Panc1 (cell line): ENCODE measurements at regions of chr1 and their contacts with region 1.

Region 1: GRCh38 chr1:226051356-226051755 is 11.2 kb upstream of the H3-3A start:
- DNase-seq: no peak
- ATAC-seq: no peak
- H3K4me3 ChIP-seq: no peak overlapping the region
- H3K27ac ChIP-seq: no peak overlapping the region
- H3K4me1 ChIP-seq: 0 out of 2 replicates have a peak, but pooled peaks cover 2% of the 10 kb centered on the region
- H3K27me3 ChIP-seq: no peaks in the 10 kb centered on the region
- CTCF ChIP-seq: no peak

Region 2: GRCh38 chr1:226107471-226108460 is 56.4 kb after region 1 on chr1:
- CTCF ChIA-PET with region 1: no interaction called
- POLR2A ChIA-PET with region 1: interaction called, 11 read pairs
- in situ Hi-C with region 1: no loop called
- intact Hi-C with region 1: no loop called
- DNase-seq: no peak
- ATAC-seq: no peak
- H3K4me3 ChIP-seq: no peak overlapping the region
- H3K27ac ChIP-seq: no peak overlapping the region
- H3K4me1 ChIP-seq: peaks cover 13% of the 10 kb centered on the region
- H3K27me3 ChIP-seq: no peaks in the 10 kb centered on the region
- CTCF ChIP-seq: no peak

Region 3: GRCh38 chr1:227318003-227318852 is 1266.9 kb after region 1 on chr1 and contains the start of gene CDC42BPA:
- CTCF ChIA-PET with region 1: no interaction called
- POLR2A ChIA-PET with region 1: interaction called, 11 read pairs
- in situ Hi-C with region 1: no loop called
- intact Hi-C with region 1: no loop called
- DNase-seq: no peak
- ATAC-seq: peak; percentile 93
- H3K4me3 ChIP-seq: peak within 1 kb of the TSS; percentile 92 to 97
- H3K27ac ChIP-seq: peak within 1 kb of the TSS; percentile 90
- H3K4me1 ChIP-seq: peaks cover 12% of the 10 kb centered on the region
- H3K27me3 ChIP-seq: no peaks in the 10 kb centered on the region
- CTCF ChIP-seq: no peak
- total RNA-seq, gene CDC42BPA: 32.8 TPM